Prostate gland (tissue), 2 donors: ENCODE measurements at regions of chr12 and their contacts with region 1.

Region 1: DNA sequence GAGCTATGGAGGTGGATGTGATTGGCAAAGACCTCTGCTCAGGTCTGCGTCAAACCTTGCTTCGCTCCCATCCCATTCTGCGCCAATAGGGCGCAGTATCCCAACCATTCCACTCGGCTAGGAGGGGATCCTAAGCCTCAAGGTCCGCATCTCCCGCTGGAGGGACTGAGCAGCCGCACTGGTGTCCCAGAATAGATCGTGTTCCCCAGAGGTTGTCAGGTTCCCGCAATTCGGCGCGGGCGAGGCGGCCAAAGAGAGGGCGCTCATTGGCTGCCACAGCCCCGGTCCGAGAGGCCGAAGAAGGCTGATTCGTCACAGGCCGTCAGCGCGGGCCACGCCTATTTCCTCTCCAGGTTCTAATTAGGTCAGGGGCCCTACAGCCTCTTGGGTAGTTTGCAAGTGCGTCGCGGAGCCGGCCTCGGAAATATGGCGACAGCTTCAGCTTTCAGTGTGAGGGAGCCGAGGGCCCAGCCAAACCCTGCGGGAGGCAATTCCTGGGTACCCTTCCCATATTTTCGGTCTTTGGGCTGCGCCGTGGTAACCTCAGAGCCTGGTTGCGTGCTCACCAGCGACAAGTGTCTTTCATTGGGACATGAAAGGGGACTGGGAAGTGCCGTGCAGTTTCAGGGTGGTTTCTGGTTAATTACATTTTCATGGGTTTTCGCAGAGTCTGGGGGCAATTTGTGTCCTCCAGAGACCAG is 5.0 kb downstream of the OR10AD1 start:
- DNase-seq: peak; percentile 96
- H3K4me3 ChIP-seq: peak overlapping the region; percentile 55 to 60
- H3K27ac ChIP-seq: peak overlapping the region; percentile 87 to 92
- H3K4me1 ChIP-seq: no peaks in the 10 kb centered on the region
- H3K27me3 ChIP-seq: no peaks in the 10 kb centered on the region
- CTCF ChIP-seq: peak in 1 of 4 experiments; percentile 20
- POLR2A ChIP-seq: peak; percentile 94

Region 2: GRCh38 chr12:47900131-47901062 is 297.7 kb before region 1 on chr12:
- intact Hi-C with region 1: no loop called
- DNase-seq: peak; percentile 23
- H3K4me3 ChIP-seq: no peak overlapping the region
- H3K27ac ChIP-seq: no peak overlapping the region
- H3K4me1 ChIP-seq: peaks cover 2% of the 10 kb centered on the region
- H3K27me3 ChIP-seq: no peaks in the 10 kb centered on the region
- CTCF ChIP-seq: peak in 1 of 4 experiments; percentile 44
- POLR2A ChIP-seq: no peak

Region 3: DNA sequence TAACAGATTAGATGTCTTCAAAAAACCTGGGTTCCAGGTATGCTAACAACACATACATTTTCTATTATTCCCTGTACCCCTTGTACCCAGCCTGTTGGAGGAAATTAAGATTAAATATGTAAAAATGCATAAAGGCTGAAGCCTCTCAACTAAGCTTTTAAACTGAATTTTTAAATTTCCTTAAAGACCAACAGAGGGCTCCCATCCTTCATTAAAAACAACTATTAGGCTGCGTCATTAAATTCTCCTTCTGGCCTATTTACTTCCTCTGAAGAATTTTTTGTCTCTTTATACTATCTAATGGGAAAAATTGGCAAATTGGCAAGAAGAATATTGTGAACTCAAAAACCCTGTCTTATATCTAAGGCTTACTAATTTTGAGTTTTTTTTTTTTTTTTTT is 114.1 kb before region 1 on chr12:
- intact Hi-C with region 1: no loop called
- DNase-seq: no peak
- H3K4me3 ChIP-seq: no peak overlapping the region
- H3K27ac ChIP-seq: no peak overlapping the region
- H3K4me1 ChIP-seq: no peaks in the 10 kb centered on the region
- H3K27me3 ChIP-seq: no peaks in the 10 kb centered on the region
- CTCF ChIP-seq: peak in 2 of 4 experiments; percentile 34 to 35
- POLR2A ChIP-seq: no peak

Region 4: DNA sequence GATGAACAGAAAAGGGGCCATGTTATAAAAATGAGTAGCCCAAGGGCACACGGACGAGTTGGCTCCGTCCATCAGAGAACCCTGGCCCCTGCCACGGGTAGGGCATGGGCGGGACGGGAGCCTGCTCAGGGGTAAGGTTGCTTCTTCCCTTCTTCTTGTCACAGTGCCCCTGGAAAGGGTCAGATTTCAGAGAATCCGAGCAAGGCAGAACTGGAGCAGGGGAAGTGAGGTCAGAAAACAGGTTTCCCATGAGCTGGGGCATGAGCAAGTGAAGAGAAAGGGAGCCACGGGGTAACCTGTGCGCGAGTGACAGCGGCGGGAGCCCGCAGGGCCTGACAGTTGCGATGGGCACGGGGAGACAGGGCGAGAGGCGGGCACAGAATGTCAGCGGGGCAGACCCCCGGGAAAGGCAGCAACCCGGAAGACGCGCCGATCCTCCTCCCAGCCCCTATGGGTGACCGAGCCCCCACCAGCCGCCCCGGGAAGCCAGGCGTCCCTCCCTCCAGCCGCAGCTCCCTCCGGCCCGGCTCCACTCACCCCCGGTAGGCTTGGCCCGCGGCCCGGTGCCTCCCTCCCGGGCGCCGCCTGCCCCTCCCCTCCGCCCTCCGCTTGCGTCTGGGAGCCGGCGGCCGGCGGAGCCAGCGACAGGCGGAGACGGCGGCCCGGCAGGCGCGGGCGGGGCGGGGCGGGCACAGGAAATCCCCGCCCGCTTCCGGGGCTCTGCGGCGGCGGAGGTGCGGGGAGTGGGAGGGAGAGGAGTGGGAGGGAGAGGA is 152.3 kb after region 1 on chr12 and contains the start of gene ZNF641:
- intact Hi-C with region 1: loop called (anchors 5 kb)
- DNase-seq: peak; percentile 82
- H3K4me3 ChIP-seq: peak within 1 kb of the TSS; percentile 66 to 77
- H3K27ac ChIP-seq: peak within 1 kb of the TSS; percentile 91 to 98
- H3K4me1 ChIP-seq: no peaks in the 10 kb centered on the region
- H3K27me3 ChIP-seq: no peaks in the 10 kb centered on the region
- CTCF ChIP-seq: no peak
- POLR2A ChIP-seq: peak; percentile 17
- total RNA-seq, gene ZNF641: 21.7 to 39.7 TPM

Region 5: DNA sequence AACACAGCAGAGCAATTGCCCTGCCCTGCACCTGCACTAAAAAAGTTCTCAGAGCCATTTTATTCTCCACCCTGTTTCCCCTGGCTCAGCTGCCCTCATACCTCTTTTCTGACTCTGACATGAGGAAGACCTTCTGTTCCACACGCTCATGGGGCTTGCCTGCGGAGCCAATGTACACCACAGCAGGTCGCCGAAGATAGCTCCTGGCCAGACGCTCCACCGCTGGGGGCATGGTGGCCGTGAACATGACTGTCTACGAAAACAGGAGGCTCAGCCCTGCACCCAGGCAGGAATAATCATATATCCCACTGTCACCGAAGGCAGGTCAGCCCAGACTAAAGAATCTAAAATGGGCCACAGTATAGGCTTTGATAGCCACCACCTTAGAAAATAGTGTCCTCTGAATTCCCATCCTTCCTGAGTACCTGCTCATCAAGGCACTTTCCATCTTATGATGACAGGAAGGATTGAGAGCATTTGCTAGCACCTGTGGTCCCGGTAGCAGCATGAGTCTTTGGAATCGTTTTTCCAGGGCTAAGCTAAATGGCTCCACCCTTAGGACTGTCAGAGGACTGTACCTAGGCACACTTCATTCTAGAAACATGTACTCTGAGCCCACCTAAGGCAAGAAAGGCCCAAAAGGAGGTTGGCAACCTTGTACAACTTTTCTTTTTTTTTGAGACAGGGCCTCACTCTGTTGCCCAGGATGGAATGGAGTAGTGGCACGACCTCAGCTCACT is 634.4 kb after region 1 on chr12:
- intact Hi-C with region 1: no loop called
- DNase-seq: no peak
- H3K4me3 ChIP-seq: no peak overlapping the region
- H3K27ac ChIP-seq: no peak overlapping the region
- H3K4me1 ChIP-seq: no peaks in the 10 kb centered on the region
- H3K27me3 ChIP-seq: no peaks in the 10 kb centered on the region
- CTCF ChIP-seq: no peak
- POLR2A ChIP-seq: no peak